Activated CD8-positive, alpha-beta T cell treated with anti-CD3 and anti-CD28 coated beads, Interleukin-2, amount 10 ng/mL, durations not matched to agents 7 days and 5 days (primary cell): ENCODE measurements at regions of chr18 and their contacts with region 1.

Region 1: GRCh38 chr18:12990967-12991838 is at the start of gene CEP192:
- DNase-seq: peak; percentile 99
- ATAC-seq: peak; percentile 95
- H3K4me3 Mint-ChIP-seq: peak within 1 kb of the TSS; percentile 97
- H3K27ac Mint-ChIP-seq: peak within 1 kb of the TSS; percentile 96
- H3K4me1 Mint-ChIP-seq: peaks cover 17% of the 10 kb centered on the region
- H3K27me3 Mint-ChIP-seq: no peaks in the 10 kb centered on the region
- total RNA-seq, gene CEP192: 55.9 to 61.0 TPM

Region 2: GRCh38 chr18:12803096-12803936 is 187.9 kb before region 1 on chr18:
- CTCF ChIA-PET with region 1: no interaction called
- POLR2A ChIA-PET with region 1: no interaction called
- DNase-seq: no peak
- ATAC-seq: no peak
- H3K4me3 Mint-ChIP-seq: no peak overlapping the region
- H3K27ac Mint-ChIP-seq: no peak overlapping the region
- H3K4me1 Mint-ChIP-seq: peaks cover 14% of the 10 kb centered on the region
- H3K27me3 Mint-ChIP-seq: no peaks in the 10 kb centered on the region

Region 3: GRCh38 chr18:12947355-12948041 is 43.7 kb before region 1 on chr18 and contains the start of gene SEH1L:
- CTCF ChIA-PET with region 1: no interaction called
- POLR2A ChIA-PET with region 1: interaction called, 24 read pairs
- DNase-seq: peak; percentile 99
- ATAC-seq: peak; percentile 90
- H3K4me3 Mint-ChIP-seq: peak within 1 kb of the TSS; percentile 94
- H3K27ac Mint-ChIP-seq: peak within 1 kb of the TSS; percentile 98
- H3K4me1 Mint-ChIP-seq: peaks cover 51% of the 10 kb centered on the region
- H3K27me3 Mint-ChIP-seq: no peaks in the 10 kb centered on the region
- total RNA-seq, gene SEH1L: 58.6 to 62.3 TPM

Region 4: DNA sequence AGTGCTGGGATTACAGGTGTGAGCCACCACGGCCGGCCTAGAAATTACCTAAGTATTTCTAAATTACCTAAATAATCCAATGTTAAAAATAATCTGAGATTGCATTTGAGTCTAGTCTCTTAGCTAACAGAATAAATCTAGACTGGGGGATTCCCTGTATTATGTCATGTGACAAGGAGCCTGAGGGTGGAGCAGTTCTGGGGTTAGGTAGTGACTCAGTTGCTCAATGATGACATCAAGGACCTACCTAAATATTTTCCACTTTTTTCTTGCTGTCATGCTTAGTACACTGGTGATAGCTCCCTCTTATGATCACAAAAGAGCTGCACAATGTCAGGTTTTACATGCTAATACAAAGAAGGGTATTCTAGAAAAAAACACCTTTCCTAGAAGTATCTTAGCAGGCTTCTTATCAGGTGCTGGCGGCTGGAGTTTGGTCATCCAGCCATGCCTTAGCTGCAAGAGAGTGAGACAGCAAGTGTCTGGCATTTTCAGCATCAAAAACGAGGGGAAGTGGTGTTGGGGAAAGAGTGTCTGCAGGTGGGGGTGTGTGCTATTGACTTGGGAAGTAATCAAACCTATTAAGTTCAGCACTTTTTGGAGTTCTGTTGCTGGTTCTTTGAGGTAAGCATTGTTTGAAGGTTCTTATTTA is 17.5 kb before region 1 on chr18:
- CTCF ChIA-PET with region 1: interaction called, 4 read pairs
- POLR2A ChIA-PET with region 1: interaction called, 18 read pairs
- DNase-seq: no peak
- ATAC-seq: no peak
- H3K4me3 Mint-ChIP-seq: no peak overlapping the region
- H3K27ac Mint-ChIP-seq: no peak overlapping the region
- H3K4me1 Mint-ChIP-seq: peaks cover 10% of the 10 kb centered on the region
- H3K27me3 Mint-ChIP-seq: no peaks in the 10 kb centered on the region

Region 5: GRCh38 chr18:13003466-13003896 is 12.3 kb after region 1 on chr18:
- CTCF ChIA-PET with region 1: interaction called, 10 read pairs
- POLR2A ChIA-PET with region 1: interaction called, 21 read pairs
- DNase-seq: peak; percentile 29
- ATAC-seq: peak; percentile 67
- H3K4me3 Mint-ChIP-seq: no peak overlapping the region
- H3K27ac Mint-ChIP-seq: no peak overlapping the region
- H3K4me1 Mint-ChIP-seq: peaks cover 21% of the 10 kb centered on the region
- H3K27me3 Mint-ChIP-seq: no peaks in the 10 kb centered on the region

Region 6: DNA sequence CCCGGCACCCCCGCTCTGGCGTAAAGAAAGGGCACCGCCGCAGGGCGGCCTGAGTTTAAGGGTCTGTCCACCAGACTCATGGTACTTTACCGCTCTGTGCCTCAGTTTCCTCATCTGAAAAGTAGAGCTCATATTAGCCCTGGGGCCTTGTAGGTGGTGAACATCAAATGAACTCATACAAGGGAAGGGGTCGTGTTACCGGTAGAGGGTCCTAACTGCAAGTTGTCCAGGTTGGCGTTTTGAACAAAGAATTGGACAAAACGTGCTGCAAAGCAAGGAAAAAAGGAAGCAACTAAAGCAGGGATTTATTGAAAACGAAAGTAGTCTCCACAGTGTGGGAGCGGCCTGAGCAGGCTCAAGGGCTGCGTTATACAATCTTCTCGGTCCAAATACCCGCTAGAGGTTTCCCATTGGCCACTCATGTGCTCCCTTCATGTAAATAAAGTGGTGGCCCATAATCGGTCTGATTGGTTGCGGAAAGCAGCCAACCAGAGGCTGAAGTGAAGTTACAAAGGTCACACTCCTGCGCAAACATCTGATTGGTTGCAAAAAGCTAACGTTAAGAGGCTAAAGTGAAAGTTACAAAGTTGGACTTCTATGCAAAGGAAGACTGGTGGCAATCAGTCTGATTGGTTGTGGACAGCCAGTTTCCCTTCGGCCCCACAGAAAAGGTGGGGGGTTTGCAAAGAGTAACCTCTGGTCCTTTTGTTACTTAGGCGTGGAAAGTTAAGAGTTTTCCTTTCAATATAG is 146.6 kb after region 1 on chr18:
- CTCF ChIA-PET with region 1: no interaction called
- POLR2A ChIA-PET with region 1: interaction called, 11 read pairs
- DNase-seq: peak; percentile 92
- ATAC-seq: peak; percentile 91
- H3K4me3 Mint-ChIP-seq: peak overlapping the region; percentile 98
- H3K27ac Mint-ChIP-seq: peak overlapping the region; percentile 98
- H3K4me1 Mint-ChIP-seq: peaks cover 32% of the 10 kb centered on the region
- H3K27me3 Mint-ChIP-seq: no peaks in the 10 kb centered on the region